GM12878 (cell line): ENCODE measurements at regions of chr6 and their contacts with region 1.

Region 1: GRCh38 chr6:149082286-149082707 is 235.2 kb upstream of the TAB2 start:
- DNase-seq: no peak
- ATAC-seq: peak; percentile 91
- H3K4me3 ChIP-seq: no peak overlapping the region
- H3K27ac ChIP-seq: no peak overlapping the region
- H3K4me1 ChIP-seq: peaks cover 33% of the 10 kb centered on the region
- H3K27me3 ChIP-seq: no peaks in the 10 kb centered on the region
- CTCF ChIP-seq: peak; percentile 77 to 88 (median 79)
- EP300 ChIP-seq: no peak
- POLR2A ChIP-seq: no peak
- RAD21 ChIP-seq: peak; percentile 94

Region 2: GRCh38 chr6:149043476-149044130 is 38.7 kb before region 1 on chr6:
- CTCF ChIA-PET with region 1: interaction called, 19 read pairs
- POLR2A ChIA-PET with region 1: interaction called, 10 read pairs
- RAD21 ChIA-PET with region 1: interaction called, 32 read pairs
- SMC1A ChIA-PET with region 1: interaction called, 61 read pairs
- in situ Hi-C with region 1: no loop called
- intact Hi-C with region 1: no loop called
- DNase-seq: no peak
- ATAC-seq: peak; percentile 43
- H3K4me3 ChIP-seq: no peak overlapping the region
- H3K27ac ChIP-seq: no peak overlapping the region
- H3K4me1 ChIP-seq: peaks cover 46% of the 10 kb centered on the region
- H3K27me3 ChIP-seq: no peaks in the 10 kb centered on the region
- CTCF ChIP-seq: peak; percentile 45 to 62 (median 45)
- EP300 ChIP-seq: no peak
- POLR2A ChIP-seq: no peak
- RAD21 ChIP-seq: peak; percentile 53; the same call in 1 of the 2 replicates

Region 3: GRCh38 chr6:149060300-149060997 is 21.8 kb before region 1 on chr6:
- CTCF ChIA-PET with region 1: interaction called, 31 read pairs
- POLR2A ChIA-PET with region 1: interaction called, 33 read pairs
- RAD21 ChIA-PET with region 1: interaction called, 56 read pairs
- SMC1A ChIA-PET with region 1: interaction called, 88 read pairs
- in situ Hi-C with region 1: no loop called
- intact Hi-C with region 1: loop called (anchors 1 kb)
- DNase-seq: peak; percentile 90
- ATAC-seq: peak; percentile 78
- H3K4me3 ChIP-seq: peak overlapping the region; percentile 11; the same call in 1 of the 2 replicates
- H3K27ac ChIP-seq: peak overlapping the region; percentile 29
- H3K4me1 ChIP-seq: peaks cover 40% of the 10 kb centered on the region
- H3K27me3 ChIP-seq: no peaks in the 10 kb centered on the region
- CTCF ChIP-seq: no peak
- EP300 ChIP-seq: peak; percentile 47 to 66; a peak in 2 of 4 replicates
- POLR2A ChIP-seq: no peak
- RAD21 ChIP-seq: no peak

Region 4: DNA sequence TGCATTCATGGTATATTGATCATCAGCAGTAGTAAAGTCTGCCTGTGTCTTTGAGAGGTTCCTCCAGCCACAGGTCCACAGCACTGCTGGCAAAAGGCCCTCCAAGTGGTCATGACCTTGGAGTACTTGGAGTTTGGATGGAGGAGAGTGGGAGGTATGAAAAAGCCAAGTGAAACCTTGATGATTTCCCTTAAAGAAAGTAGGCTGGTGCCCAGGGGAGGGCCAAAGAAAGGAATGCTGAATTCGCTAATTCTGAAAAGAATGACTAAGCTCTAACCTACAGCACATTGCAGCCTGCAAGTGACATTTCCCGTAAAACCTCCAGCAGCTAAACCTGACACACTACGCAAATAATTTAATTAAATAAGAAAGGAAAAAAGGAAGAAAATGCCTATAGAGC is 11.9 kb after region 1 on chr6:
- CTCF ChIA-PET with region 1: interaction called, 11 read pairs
- POLR2A ChIA-PET with region 1: interaction called, 7 read pairs
- RAD21 ChIA-PET with region 1: interaction called, 7 read pairs
- SMC1A ChIA-PET with region 1: interaction called, 15 read pairs
- in situ Hi-C with region 1: no loop called
- intact Hi-C with region 1: no loop called
- DNase-seq: no peak
- ATAC-seq: no peak
- H3K4me3 ChIP-seq: no peak overlapping the region
- H3K27ac ChIP-seq: no peak overlapping the region
- H3K4me1 ChIP-seq: peaks cover 4% of the 10 kb centered on the region; the same call in 1 of the 2 replicates
- H3K27me3 ChIP-seq: no peaks in the 10 kb centered on the region
- CTCF ChIP-seq: no peak
- EP300 ChIP-seq: no peak
- POLR2A ChIP-seq: no peak
- RAD21 ChIP-seq: no peak

Region 5: GRCh38 chr6:149140137-149140909 is 58.0 kb after region 1 on chr6:
- CTCF ChIA-PET with region 1: interaction called, 3 read pairs
- POLR2A ChIA-PET with region 1: no interaction called
- RAD21 ChIA-PET with region 1: interaction called, 3 read pairs
- SMC1A ChIA-PET with region 1: interaction called, 3 read pairs
- in situ Hi-C with region 1: no loop called
- intact Hi-C with region 1: loop called (anchors 1 kb)
- DNase-seq: peak; percentile 65
- ATAC-seq: peak; percentile 94
- H3K4me3 ChIP-seq: peak overlapping the region; percentile 17; the same call in 1 of the 2 replicates
- H3K27ac ChIP-seq: peak overlapping the region; percentile 98
- H3K4me1 ChIP-seq: peaks cover 25% of the 10 kb centered on the region
- H3K27me3 ChIP-seq: no peaks in the 10 kb centered on the region
- CTCF ChIP-seq: no peak
- EP300 ChIP-seq: peak; percentile 80 to 84; a peak in 3 of 4 replicates
- POLR2A ChIP-seq: peak; percentile 72
- RAD21 ChIP-seq: peak; percentile 16; the same call in 1 of the 2 replicates

Region 6: DNA sequence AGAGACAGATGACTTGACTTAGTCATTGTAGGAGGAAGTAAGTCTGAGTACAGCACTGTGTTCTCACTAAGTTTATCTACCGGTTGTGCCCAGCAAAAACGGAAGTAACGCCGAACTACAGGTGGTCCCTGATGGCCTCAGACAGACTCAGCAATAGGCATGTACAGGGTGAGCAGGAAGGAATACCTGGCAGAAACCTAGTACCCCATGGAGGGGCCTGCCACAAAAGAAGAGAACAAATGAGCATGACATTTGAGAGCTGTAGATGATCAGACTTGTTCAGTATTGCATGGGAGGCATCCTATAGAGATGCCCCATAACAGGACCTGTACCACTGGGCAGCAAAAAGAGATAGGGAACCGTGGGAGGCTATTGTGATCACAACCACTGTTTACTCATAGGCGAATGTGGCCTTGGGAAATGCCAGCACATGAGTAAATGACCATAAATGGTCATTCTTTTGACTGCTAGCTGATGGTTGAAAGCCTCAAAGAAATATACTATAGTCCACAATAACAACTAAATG is 128.8 kb after region 1 on chr6:
- CTCF ChIA-PET with region 1: no interaction called
- POLR2A ChIA-PET with region 1: no interaction called
- RAD21 ChIA-PET with region 1: interaction called, 4 read pairs
- SMC1A ChIA-PET with region 1: interaction called, 3 read pairs
- in situ Hi-C with region 1: no loop called
- intact Hi-C with region 1: loop called (anchors 5 kb)
- DNase-seq: no peak
- ATAC-seq: peak; percentile 66
- H3K4me3 ChIP-seq: no peak overlapping the region
- H3K27ac ChIP-seq: peak overlapping the region; percentile 64
- H3K4me1 ChIP-seq: peaks cover 43% of the 10 kb centered on the region
- H3K27me3 ChIP-seq: no peaks in the 10 kb centered on the region
- CTCF ChIP-seq: no peak
- EP300 ChIP-seq: no peak
- POLR2A ChIP-seq: no peak
- RAD21 ChIP-seq: no peak

Region 7: DNA sequence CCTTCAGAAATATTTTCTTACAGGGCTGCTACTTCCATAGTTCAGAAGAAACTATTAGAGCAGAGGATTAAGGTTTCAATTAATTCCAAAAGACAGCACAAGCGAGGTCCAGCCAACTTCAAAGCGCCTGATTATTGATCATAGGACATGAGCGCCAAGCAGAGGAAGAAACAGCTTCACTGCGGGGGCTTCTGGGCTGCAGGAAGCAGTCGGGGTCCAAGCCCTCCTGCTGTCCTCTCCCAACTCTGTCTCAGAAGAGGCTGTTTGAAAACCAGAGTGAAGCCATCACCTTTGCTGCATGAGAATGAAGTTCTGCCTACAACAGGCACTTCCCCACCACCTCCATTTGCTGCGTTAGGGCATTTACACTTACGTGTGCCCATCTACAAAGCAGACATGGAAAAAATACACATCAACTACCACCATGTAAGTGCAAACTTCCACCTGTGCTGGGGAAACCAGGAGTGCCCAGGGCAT is 341.7 kb after region 1 on chr6:
- CTCF ChIA-PET with region 1: interaction called, 9 read pairs
- POLR2A ChIA-PET with region 1: interaction called, 4 read pairs
- RAD21 ChIA-PET with region 1: interaction called, 13 read pairs
- SMC1A ChIA-PET with region 1: interaction called, 13 read pairs
- in situ Hi-C with region 1: loop called (anchors 5 kb)
- intact Hi-C with region 1: no loop called
- DNase-seq: no peak
- ATAC-seq: no peak
- H3K4me3 ChIP-seq: no peak overlapping the region
- H3K27ac ChIP-seq: no peak overlapping the region
- H3K4me1 ChIP-seq: peaks cover 11% of the 10 kb centered on the region
- H3K27me3 ChIP-seq: no peaks in the 10 kb centered on the region; a peak in 1 of 4 replicates
- CTCF ChIP-seq: no peak
- EP300 ChIP-seq: no peak
- POLR2A ChIP-seq: no peak
- RAD21 ChIP-seq: no peak